SK-N-SH (cell line): ENCODE measurements at regions of chr15 and their contacts with region 1.

Region 1: DNA sequence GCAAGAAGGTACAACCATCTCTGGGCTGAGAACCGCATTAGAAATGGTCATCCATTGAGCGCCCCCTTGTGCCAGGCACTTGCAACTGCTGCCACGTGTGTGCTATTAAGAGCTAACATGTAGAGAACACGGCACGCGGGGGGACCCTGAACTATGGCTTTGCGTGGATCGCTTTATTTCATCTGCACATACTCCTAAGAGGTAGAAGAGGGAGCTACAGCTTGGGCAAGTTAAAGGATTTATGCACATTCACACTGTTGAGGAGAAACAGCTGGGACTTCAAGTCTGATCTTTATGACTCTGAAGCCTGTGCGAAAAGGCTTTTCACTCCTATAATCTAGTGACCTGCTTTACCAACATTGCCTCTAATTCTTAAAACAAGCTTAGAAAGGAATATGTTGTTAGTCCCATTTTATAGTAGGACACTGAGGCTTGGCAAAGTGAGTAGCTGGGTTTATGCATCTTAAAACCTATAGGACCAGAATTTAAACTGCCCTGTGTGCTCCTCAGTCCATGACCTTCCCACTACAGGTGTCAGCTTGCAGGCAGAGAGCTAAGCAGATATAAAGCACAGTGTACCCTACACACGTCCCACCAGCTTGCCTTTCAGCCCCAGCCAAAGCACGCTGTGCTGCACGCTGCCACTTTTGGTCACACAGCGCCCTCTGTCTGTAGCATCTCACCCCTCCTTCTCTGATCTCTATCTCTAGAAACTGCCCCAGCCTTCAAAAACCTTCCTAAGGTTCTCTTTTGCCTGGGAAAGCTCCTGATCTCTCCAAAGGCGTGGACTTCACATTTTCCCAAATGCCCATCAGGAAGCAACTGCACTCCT is 57.8 kb downstream of the STARD5 start:
- DNase-seq: peak; percentile 82
- H3K4me3 ChIP-seq: peak overlapping the region; percentile 9 to 51; a peak in 2 of 4 replicates
- H3K27ac ChIP-seq: no peak overlapping the region
- H3K4me1 ChIP-seq: peaks cover 5 to 11% of the 10 kb centered on the region in 2 experiments; a peak in 2 of 4 replicates
- H3K27me3 ChIP-seq: peaks cover 10% of the 10 kb centered on the region; the same call in 1 of the 2 replicates
- CTCF ChIP-seq: peak; percentile 84
- EP300 ChIP-seq: no peak
- RAD21 ChIP-seq: peak; percentile 95

Region 2: DNA sequence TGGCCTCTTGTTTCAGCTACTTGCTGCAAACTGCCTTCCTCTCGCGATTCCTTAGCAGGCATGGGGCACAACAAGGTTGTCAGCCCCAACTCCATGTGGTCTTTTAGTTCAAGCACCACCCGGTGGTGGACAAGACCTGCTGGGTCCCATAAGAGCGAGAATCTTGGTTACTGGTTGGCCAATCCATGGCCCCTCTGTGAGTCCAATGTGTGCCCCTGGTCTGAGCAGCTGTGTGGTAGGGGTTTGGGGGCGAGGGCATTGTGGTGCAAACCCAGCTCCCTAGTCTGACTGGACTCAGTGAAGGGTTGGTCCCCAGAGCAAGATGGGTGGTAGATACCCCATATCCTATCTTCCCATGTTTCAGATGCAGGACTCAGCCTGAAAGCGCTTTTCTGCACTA is 325.3 kb before region 1 on chr15:
- CTCF ChIA-PET with region 1: no interaction called
- POLR2A ChIA-PET with region 1: no interaction called
- DNase-seq: no peak
- H3K4me3 ChIP-seq: no peak overlapping the region
- H3K27ac ChIP-seq: no peak overlapping the region
- H3K4me1 ChIP-seq: no peaks in the 10 kb centered on the region; a peak in 1 of 4 replicates
- H3K27me3 ChIP-seq: no peaks in the 10 kb centered on the region
- CTCF ChIP-seq: no peak
- EP300 ChIP-seq: no peak
- RAD21 ChIP-seq: no peak

Region 3: DNA sequence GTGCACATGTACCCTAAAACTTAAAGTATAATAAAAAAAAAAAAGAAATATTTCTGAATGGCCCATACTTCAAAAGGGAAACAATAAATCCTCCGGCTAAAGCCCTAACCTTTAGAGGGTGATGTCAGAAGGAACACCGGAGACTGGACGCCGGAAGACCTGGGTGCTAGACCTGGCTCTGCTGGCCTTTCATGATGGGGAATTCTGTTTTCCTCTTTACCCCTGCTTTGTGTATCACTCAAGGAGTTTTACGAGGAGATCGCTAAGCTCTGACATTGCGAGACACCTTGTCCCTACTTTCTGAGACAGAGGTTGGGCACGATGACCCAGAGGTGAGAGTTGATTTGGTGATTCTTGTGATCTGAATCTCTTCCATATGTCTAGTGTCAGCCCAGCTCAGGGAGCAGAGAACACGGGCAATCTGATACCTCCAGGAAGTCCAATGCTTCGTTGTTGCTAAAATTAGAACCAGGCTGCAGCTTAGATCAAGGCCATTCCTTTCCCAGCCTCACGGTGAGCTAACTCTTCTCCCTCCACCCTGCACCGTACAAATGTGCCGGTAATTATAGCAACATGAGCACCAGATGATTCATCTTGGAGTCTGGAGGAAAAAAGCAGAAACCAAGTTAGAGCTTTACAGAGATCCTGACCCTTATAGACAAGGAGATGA is 174.1 kb before region 1 on chr15:
- CTCF ChIA-PET with region 1: interaction called, 451 read pairs
- POLR2A ChIA-PET with region 1: no interaction called
- DNase-seq: peak; percentile 23
- H3K4me3 ChIP-seq: peak overlapping the region in 1 of 2 experiments; percentile 43; a peak in 3 of 4 replicates
- H3K27ac ChIP-seq: peak overlapping the region; percentile 74 to 90; a peak in 3 of 4 replicates
- H3K4me1 ChIP-seq: peaks cover 0 to 4% of the 10 kb centered on the region in 2 experiments; a peak in 1 of 4 replicates
- H3K27me3 ChIP-seq: no peaks in the 10 kb centered on the region
- CTCF ChIP-seq: no peak
- EP300 ChIP-seq: peak in 1 of 2 experiments; percentile 40; a peak in 1 of 4 replicates
- RAD21 ChIP-seq: no peak

Region 4: GRCh38 chr15:81146006-81146405 is 120.2 kb before region 1 on chr15:
- CTCF ChIA-PET with region 1: interaction called, 395 read pairs
- POLR2A ChIA-PET with region 1: no interaction called
- DNase-seq: no peak
- H3K4me3 ChIP-seq: no peak overlapping the region
- H3K27ac ChIP-seq: no peak overlapping the region
- H3K4me1 ChIP-seq: peaks cover 0 to 5% of the 10 kb centered on the region in 2 experiments; a peak in 2 of 4 replicates
- H3K27me3 ChIP-seq: 0 out of 2 replicates have a peak, but pooled peaks cover 7% of the 10 kb centered on the region
- CTCF ChIP-seq: no peak
- EP300 ChIP-seq: no peak
- RAD21 ChIP-seq: no peak

Region 5: GRCh38 chr15:81182756-81183438 is 83.3 kb before region 1 on chr15:
- CTCF ChIA-PET with region 1: interaction called, 14 read pairs
- POLR2A ChIA-PET with region 1: no interaction called
- DNase-seq: no peak
- H3K4me3 ChIP-seq: no peak overlapping the region
- H3K27ac ChIP-seq: no peak overlapping the region
- H3K4me1 ChIP-seq: no peaks in the 10 kb centered on the region
- H3K27me3 ChIP-seq: no peaks in the 10 kb centered on the region
- CTCF ChIP-seq: no peak
- EP300 ChIP-seq: no peak
- RAD21 ChIP-seq: no peak

Region 6: GRCh38 chr15:81286621-81287121 is 20.5 kb after region 1 on chr15:
- CTCF ChIA-PET with region 1: interaction called, 57 read pairs
- POLR2A ChIA-PET with region 1: no interaction called
- DNase-seq: no peak
- H3K4me3 ChIP-seq: no peak overlapping the region
- H3K27ac ChIP-seq: no peak overlapping the region
- H3K4me1 ChIP-seq: no peaks in the 10 kb centered on the region
- H3K27me3 ChIP-seq: peaks cover 20% of the 10 kb centered on the region
- CTCF ChIP-seq: no peak
- EP300 ChIP-seq: no peak
- RAD21 ChIP-seq: no peak

Region 7: DNA sequence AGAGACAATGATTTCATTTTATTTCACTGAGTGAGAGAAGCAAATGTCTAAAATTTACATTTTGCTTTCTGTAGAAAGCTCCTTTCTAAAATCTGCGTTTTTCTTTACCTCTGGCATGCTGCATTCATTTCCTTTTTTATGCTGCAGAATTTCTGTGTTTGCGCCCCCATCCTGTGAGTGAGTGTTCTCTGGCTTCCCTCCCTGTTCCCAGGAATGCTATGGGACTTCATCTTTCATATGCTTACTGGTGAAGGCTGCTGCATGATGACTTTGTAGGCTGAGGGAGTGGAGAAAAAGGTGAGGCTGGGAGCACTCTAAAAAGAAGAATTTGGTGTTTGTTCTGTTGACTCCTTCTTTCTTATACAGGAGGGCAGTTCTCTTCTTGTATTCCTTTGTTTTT is 115.6 kb after region 1 on chr15:
- CTCF ChIA-PET with region 1: interaction called, 10 read pairs
- POLR2A ChIA-PET with region 1: no interaction called
- DNase-seq: no peak
- H3K4me3 ChIP-seq: no peak overlapping the region
- H3K27ac ChIP-seq: no peak overlapping the region
- H3K4me1 ChIP-seq: no peaks in the 10 kb centered on the region
- H3K27me3 ChIP-seq: no peaks in the 10 kb centered on the region
- CTCF ChIP-seq: no peak
- EP300 ChIP-seq: no peak
- RAD21 ChIP-seq: no peak

Region 8: GRCh38 chr15:81443040-81443820 is 177.1 kb after region 1 on chr15:
- CTCF ChIA-PET with region 1: no interaction called
- POLR2A ChIA-PET with region 1: no interaction called
- DNase-seq: no peak
- H3K4me3 ChIP-seq: no peak overlapping the region
- H3K27ac ChIP-seq: no peak overlapping the region
- H3K4me1 ChIP-seq: no peaks in the 10 kb centered on the region
- H3K27me3 ChIP-seq: no peaks in the 10 kb centered on the region
- CTCF ChIP-seq: no peak
- EP300 ChIP-seq: no peak
- RAD21 ChIP-seq: no peak